Sciatic nerve (tissue), 2 donors: ENCODE measurements at regions of chr11 and their contacts with region 1.

Region 1: GRCh38 chr11:94521689-94522088 is 9.4 kb downstream of the C11orf97 start:
- DNase-seq: no peak
- ATAC-seq: no peak

Region 2: GRCh38 chr11:94597896-94598295 is 76.2 kb after region 1 on chr11:
- intact Hi-C with region 1: loop called (anchors 2 kb)
- DNase-seq: no peak
- ATAC-seq: peak; percentile 52

Region 3: GRCh38 chr11:94910779-94911178 is 389.1 kb after region 1 on chr11:
- intact Hi-C with region 1: no loop called
- DNase-seq: no peak
- ATAC-seq: no peak